Activated naive CD4-positive, alpha-beta T cell treated with anti-CD3 and anti-CD28 coated beads for 36 hours (primary cell): ENCODE measurements at regions of chr13 and their contacts with region 1.

Region 1: DNA sequence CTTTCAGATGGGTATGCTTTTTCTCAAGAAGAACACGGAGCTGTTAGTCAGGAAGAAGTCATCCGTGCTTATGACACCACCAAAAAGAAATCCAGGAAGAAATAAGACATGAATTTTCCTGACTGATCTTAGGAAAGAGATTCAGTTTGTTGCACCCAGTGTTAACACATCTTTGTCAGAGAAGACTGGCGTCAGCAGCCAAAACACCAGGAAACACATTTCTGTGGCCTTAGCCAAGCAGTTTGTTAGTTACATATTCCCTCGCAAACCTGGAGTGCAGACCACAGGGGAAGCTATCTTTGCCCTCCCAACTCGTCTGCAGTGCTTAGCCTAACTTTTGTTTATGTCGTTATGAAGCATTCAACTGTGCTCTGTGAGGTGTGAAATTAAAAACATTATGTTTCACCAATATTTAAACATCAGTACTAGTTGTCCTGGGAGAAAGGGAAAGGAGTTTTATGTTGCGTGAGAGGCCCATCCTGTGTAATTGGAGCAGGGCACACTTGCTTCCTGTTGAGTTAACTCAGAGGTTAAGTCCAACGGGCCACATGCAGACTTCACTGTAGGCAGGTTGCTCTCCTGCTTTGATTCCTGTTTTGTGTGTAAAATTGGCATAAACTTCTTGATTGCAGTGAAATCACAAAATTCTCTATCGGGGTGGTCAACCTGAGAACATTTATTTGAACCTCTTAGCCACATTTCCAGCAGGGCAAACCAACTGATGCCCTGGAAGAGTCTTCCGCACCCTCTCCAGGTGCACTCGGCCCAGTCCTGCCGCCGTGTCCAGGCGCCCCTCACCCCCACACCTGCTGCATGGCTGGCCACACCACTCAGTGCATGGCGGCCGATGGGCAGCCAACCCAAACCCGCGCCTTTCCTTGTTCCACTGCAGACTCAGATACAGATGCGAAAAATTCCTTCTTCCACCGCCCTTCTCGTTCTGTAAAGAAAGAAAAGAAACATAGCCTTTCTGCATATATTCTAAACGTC is 31.6 kb downstream of the SHISA2 start:
- DNase-seq: no peak
- H3K4me3 Mint-ChIP-seq: no peak overlapping the region
- H3K27ac Mint-ChIP-seq: no peak overlapping the region
- H3K4me1 Mint-ChIP-seq: peaks cover 22% of the 10 kb centered on the region
- H3K27me3 Mint-ChIP-seq: no peaks in the 10 kb centered on the region

Region 2: GRCh38 chr13:25806264-25806974 is 213.8 kb before region 1 on chr13:
- CTCF ChIA-PET with region 1: no interaction called
- intact Hi-C with region 1: loop called (anchors 5 kb)
- DNase-seq: peak; percentile 7
- H3K4me3 Mint-ChIP-seq: no peak overlapping the region
- H3K27ac Mint-ChIP-seq: peak overlapping the region; percentile 50
- H3K4me1 Mint-ChIP-seq: peaks cover 12% of the 10 kb centered on the region
- H3K27me3 Mint-ChIP-seq: peaks cover 18% of the 10 kb centered on the region